OCI-LY7 (cell line): ENCODE measurements at regions of chr16 and their contacts with region 1.

Region 1: DNA sequence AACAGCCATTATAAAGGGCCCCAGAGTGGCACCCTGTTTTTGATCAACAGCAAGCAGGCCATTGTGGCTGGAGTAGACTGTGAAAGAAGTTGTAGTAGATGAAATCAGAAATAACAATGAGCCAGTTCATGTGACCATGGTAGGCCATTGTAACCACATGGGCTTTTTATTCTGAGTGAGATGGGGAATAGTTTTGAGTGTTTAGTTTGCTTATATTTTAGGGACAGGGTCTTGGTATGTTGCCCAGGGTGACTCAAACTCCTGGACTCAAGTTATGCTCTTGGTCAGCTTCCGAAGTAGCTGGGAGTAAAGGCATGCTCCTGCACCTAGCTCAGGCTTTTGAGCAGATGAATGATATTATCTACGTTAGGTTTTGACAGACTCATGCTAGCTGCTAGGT is 12.0 kb downstream of the CBFB start:
- DNase-seq: no peak
- H3K4me3 ChIP-seq: no peak overlapping the region
- H3K27ac ChIP-seq: no peak overlapping the region
- H3K4me1 ChIP-seq: no peaks in the 10 kb centered on the region
- CTCF ChIP-seq: no peak

Region 2: GRCh38 chr16:66740010-66740409 is 300.9 kb before region 1 on chr16:
- CTCF ChIA-PET with region 1: no interaction called
- POLR2A ChIA-PET with region 1: no interaction called
- intact Hi-C with region 1: no loop called
- DNase-seq: peak; percentile 53
- H3K4me3 ChIP-seq: no peak overlapping the region
- H3K27ac ChIP-seq: no peak overlapping the region
- H3K4me1 ChIP-seq: no peaks in the 10 kb centered on the region
- CTCF ChIP-seq: peak; percentile 88

Region 3: DNA sequence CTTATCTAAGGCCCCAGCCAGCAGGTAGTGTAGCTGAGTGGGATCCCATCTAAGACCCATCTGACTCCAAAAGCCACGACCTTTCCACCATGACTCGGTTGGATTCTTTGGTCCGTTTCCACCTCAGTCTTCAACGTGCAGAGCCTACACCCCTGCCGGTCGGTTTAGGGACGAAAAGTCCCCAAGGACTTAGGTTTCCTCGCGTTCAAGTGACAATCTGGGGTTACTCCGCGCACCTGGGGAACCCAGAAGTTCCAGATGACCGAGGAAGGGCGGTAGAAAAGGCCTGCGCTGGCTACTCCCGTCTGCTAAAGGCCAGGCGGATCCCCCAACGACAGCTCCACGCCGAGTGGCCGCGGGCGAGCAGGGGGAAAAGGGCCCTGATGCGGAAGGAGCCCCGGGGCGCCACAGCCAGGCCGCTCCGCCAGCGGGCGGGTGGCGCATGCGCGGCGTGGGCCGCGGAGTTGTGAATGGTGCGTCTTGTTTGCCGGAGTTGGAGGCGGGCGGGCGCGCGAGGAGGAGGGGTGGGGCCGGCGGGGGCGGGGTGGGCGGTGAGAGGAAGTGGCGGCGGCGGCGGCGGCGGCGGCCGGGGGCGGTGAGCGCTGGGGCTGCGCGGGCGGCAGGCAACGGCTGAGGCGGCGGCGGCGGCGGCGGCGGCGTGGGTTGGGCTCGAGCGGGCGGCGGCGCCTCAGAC is 12.2 kb before region 1 on chr16 and contains the start of gene CBFB:
- CTCF ChIA-PET with region 1: no interaction called
- POLR2A ChIA-PET with region 1: interaction called, 10 read pairs
- intact Hi-C with region 1: no loop called
- DNase-seq: peak; percentile 94
- H3K4me3 ChIP-seq: peak within 1 kb of the TSS; percentile 90
- H3K27ac ChIP-seq: peak within 1 kb of the TSS; percentile 70
- H3K4me1 ChIP-seq: peaks cover 33% of the 10 kb centered on the region
- CTCF ChIP-seq: peak; percentile 53
- total RNA-seq, gene CBFB: 93.5 and 187 TPM in 2 replicates

Region 4: DNA sequence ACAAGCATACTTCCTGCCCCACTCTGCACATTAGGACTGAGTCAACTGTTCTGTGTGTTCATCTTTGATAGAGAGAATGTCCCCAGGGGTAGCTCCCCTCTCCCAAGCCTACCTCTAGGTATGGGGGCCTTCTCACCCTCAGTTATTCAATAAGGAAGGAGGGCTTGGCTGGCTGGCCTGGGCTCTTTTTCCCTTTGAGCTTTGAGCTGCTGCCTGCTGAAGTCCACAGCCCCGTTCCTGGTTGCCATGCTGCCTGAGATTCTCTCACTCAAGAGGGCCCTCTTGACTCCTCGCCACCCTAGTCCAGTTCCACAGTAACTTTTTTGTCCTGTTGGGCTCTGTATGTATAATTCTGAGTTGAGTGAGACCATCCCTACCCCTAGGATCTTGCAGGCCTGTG is 104.8 kb after region 1 on chr16:
- CTCF ChIA-PET with region 1: no interaction called
- POLR2A ChIA-PET with region 1: no interaction called
- intact Hi-C with region 1: no loop called
- DNase-seq: no peak
- H3K4me3 ChIP-seq: no peak overlapping the region
- H3K27ac ChIP-seq: no peak overlapping the region
- H3K4me1 ChIP-seq: no peaks in the 10 kb centered on the region
- CTCF ChIP-seq: no peak

Region 5: GRCh38 chr16:67173808-67174705 is 133.2 kb after region 1 on chr16:
- CTCF ChIA-PET with region 1: no interaction called
- POLR2A ChIA-PET with region 1: no interaction called
- intact Hi-C with region 1: no loop called
- DNase-seq: peak; percentile 35
- H3K4me3 ChIP-seq: peak overlapping the region; percentile 31
- H3K27ac ChIP-seq: no peak overlapping the region
- H3K4me1 ChIP-seq: peaks cover 32% of the 10 kb centered on the region
- CTCF ChIP-seq: 0 out of 2 replicates have a peak, but pooled peaks have one; percentile 10